Pancreas (tissue), 10 donors: ENCODE measurements at regions of chr17 and their contacts with region 1.

Region 1: DNA sequence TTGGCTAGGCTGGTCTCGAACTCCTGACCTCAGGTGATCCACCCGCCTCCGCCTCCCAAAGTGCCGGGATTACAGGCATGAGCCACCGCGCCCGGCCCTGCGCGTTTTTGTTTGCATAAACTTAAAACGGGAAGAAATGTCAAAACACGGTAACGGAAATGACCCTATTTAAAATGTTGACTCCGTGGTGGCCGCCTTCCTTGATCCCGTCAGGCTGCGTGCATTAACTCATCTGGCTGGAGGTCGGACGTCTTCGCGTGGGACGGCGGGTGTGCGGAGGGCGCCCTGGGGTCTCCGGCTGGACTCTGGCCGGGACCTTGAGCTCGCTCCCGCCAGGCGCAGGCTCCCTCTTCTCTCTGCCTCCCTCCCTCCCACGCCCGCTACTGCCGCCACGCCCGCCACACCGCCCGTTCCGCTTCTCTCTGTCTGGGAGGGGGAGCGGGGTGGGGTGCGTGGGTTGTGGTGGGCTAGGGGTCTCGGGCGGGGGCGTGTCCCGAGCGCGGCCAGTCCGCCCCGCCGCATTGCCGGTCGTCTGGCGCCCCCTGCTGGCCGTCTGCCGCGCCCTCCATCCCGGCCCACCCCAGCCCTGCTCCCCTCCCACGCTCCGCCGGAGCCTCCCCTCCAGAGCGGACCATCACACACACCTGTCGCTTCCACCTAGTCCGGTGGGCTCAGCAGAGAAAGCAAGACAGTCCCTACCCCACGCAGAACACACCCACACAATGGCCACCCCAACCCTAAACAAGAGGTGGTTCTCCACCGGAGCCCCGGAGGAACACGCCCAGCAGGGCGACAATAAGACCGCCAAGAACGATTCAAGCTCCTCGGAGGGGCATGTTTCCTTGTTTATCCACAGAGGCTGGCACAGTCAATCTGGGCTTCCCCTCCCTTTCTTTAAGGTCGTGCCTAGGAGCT is 1.2 kb upstream of the CCDC42 start:
- DNase-seq: peak; percentile 37 to 93 (median 66)
- ATAC-seq: peak; percentile 88 to 96 (median 94)
- H3K4me3 ChIP-seq: peak overlapping the region; percentile 9 to 67 (median 42)
- H3K27ac ChIP-seq: no peak overlapping the region
- H3K4me1 ChIP-seq: no peaks in the 10 kb centered on the region
- H3K27me3 ChIP-seq: no peaks in the 10 kb centered on the region
- CTCF ChIP-seq: peak; percentile 91 to 96 (median 94)

Region 2: GRCh38 chr17:7413346-7413985 is 1332.4 kb before region 1 on chr17:
- intact Hi-C with region 1: no loop called
- DNase-seq: no peak
- ATAC-seq: peak in 2 of 4 donors; percentile 18 to 33
- H3K4me3 ChIP-seq: no peak overlapping the region
- H3K27ac ChIP-seq: no peak overlapping the region
- H3K4me1 ChIP-seq: no peaks in the 10 kb centered on the region
- H3K27me3 ChIP-seq: no peaks in the 10 kb centered on the region
- CTCF ChIP-seq: no peak

Region 3: DNA sequence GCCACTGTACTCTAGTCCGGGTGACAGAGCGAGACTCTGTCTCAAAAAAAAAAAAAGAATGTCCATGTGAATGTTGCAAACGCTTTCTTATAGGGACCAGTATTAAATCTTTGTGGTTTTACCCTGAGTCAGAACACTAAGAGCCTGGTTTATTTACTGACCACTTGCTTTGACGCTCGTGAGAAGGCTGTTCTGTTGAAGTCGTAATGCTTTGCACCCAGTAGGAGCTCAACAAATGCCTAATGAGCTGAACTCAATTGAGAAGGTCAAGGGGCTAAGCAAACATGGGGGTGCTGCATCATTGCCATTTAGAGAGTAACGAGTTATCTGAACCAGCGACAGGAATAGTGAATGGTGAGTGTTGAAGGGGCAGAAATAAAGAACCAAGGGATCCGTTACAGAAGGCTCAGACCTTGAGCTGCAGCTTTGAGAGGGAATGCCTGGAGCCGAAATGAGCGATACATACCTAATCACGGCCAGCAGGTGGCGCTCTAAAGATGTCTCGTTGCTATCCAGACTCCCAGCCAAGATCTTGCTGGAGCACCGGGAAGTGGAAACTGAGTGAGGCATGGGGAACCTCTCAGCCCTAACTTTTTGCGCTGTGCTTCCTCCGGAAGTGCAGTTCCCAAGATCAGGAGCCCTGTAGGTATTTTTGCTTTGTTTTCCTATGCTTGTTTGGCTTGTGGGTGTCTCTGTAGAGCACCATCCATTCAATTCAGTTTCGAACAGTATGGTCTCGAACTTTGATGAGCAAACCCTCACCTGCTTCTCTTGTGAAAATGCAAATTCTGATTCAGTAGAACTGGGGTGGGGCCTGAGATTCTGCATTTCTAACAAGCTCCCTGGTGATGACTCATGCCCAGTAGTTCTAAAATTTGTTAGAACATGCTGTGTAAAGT is 335.6 kb before region 1 on chr17:
- intact Hi-C with region 1: loop called (anchors 10 kb)
- DNase-seq: peak; percentile 81 to 98 (median 92)
- ATAC-seq: peak; percentile 95 to 99 (median 98)
- H3K4me3 ChIP-seq: no peak overlapping the region
- H3K27ac ChIP-seq: no peak overlapping the region
- H3K4me1 ChIP-seq: peaks cover 0 to 4% (median 0%) of the 10 kb centered on the region in 3 donors
- H3K27me3 ChIP-seq: no peaks in the 10 kb centered on the region
- CTCF ChIP-seq: peak; percentile 80 to 89 (median 84)

Region 4: DNA sequence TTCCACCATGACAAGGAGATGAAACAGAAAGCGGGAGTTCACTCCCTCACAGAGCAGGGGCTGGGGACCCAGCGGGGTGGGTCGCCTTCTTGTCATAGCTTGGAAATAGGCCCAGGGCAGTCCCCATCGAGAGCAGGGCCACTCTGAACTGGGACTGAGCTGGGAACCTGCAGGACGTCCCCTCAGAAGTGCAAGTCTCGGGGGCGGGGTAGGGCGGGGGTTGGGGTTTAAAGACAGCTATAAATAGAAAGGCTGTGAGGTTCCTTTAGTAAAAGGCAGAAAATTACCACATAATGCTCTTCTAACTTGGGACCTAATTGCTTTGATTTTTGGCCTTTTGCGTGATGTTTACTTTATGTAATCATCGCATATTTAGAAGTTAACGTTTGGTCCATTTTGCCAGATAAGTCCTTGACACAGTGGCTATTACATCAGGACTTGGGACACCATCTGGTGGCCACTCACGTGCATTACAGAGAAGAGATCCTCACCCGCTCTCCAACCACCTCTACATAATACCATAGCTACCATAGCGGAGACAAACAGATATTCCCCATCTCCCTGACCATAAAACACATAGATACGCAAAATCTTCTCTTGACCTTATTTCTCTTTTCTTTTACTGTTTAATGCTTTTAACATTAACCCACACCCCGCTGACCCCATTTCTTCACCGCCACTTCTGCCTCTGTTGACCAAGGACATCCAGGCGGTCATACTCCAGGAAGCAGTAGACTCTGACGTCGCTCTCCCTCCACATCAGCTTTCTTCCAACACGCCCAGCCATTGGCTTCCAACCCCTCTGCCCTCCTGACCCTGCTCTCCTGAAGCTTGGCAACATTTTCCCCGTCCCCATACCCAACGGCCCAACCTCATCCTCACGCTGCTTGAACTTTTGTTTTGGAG is 149.1 kb after region 1 on chr17:
- intact Hi-C with region 1: no loop called
- DNase-seq: peak in 4 of 6 donors; percentile 45 to 69 (median 56)
- ATAC-seq: peak; percentile 89 to 98 (median 95)
- H3K4me3 ChIP-seq: no peak overlapping the region
- H3K27ac ChIP-seq: no peak overlapping the region
- H3K4me1 ChIP-seq: no peaks in the 10 kb centered on the region
- H3K27me3 ChIP-seq: no peaks in the 10 kb centered on the region
- CTCF ChIP-seq: peak; percentile 70 to 74 (median 72)

Region 5: DNA sequence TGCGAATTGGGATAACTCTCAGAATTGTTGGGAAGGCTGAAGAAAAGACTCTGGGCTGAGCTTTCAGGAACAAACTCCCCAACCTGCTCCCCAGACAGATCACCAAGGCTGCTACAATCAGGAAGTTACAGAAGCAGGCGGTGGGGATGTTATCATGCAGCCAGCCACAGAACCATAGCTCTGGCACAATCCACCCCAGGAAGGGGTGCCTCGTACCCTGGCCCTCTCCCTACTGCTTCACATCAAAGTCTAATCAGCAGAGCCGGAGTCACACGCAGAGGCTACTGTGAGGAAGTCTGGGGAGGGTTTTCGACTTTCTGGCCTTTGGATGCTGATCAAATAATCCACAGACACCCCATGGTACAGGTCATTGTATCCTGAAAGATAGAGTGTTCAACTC is 362.3 kb after region 1 on chr17:
- intact Hi-C with region 1: no loop called
- DNase-seq: no peak
- ATAC-seq: no peak
- H3K4me3 ChIP-seq: no peak overlapping the region
- H3K27ac ChIP-seq: no peak overlapping the region
- H3K4me1 ChIP-seq: no peaks in the 10 kb centered on the region
- H3K27me3 ChIP-seq: no peaks in the 10 kb centered on the region
- CTCF ChIP-seq: no peak